ENCODE measurements at regions of chr7 and their contacts with region 1.

Region 1: GRCh38 chr7:43869006-43869866 is at the start of gene MRPS24:
- DNase-seq: peak; percentile 91
- H3K4me3 ChIP-seq: peak within 1 kb of the TSS; percentile 52 to 71 (median 66)
- H3K27ac ChIP-seq: no peak within 1 kb of the TSS
- H3K4me1 ChIP-seq: peaks cover 11% of the 10 kb centered on the region
- H3K27me3 ChIP-seq: no peaks in the 10 kb centered on the region
- CTCF ChIP-seq: no peak
- POLR2A ChIP-seq: peak; percentile 95
- total RNA-seq, gene MRPS24: 105 and 110 TPM in 2 replicates

Region 2: DNA sequence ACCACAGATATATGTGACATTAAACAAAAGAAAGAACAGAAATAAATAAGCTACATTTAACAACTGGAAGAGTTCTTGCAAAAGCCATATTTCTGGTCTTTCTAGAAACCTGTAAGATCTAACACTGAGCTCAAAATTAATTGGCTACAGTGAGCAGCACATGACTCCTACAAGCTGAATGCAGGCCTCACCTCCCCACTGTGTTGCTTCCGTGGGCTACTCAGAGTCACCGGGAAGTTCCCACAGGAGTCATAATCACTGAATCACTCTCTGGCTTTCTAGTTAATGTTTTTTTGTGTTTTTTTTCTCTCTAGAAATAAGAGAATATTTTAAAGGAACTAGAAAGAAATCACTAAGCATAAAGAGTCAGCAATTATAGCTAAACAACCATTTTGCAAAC is 10.2 kb after region 1 on chr7:
- CTCF ChIA-PET with region 1: interaction called, 9 read pairs
- POLR2A ChIA-PET with region 1: interaction called, 10 read pairs
- dilution Hi-C with region 1: no loop called
- intact Hi-C with region 1: loop called (anchors 1 kb)
- DNase-seq: peak; percentile 77
- H3K4me3 ChIP-seq: no peak overlapping the region
- H3K27ac ChIP-seq: peak overlapping the region; percentile 58
- H3K4me1 ChIP-seq: peaks cover 30% of the 10 kb centered on the region
- H3K27me3 ChIP-seq: no peaks in the 10 kb centered on the region
- CTCF ChIP-seq: no peak
- POLR2A ChIP-seq: no peak

Region 3: GRCh38 chr7:43960933-43961332 is 91.7 kb after region 1 on chr7:
- CTCF ChIA-PET with region 1: no interaction called
- POLR2A ChIA-PET with region 1: interaction called, 12 read pairs
- dilution Hi-C with region 1: no loop called
- intact Hi-C with region 1: no loop called
- DNase-seq: no peak
- H3K4me3 ChIP-seq: no peak overlapping the region
- H3K27ac ChIP-seq: no peak overlapping the region
- H3K4me1 ChIP-seq: peaks cover under 1% of the 10 kb centered on the region
- H3K27me3 ChIP-seq: no peaks in the 10 kb centered on the region
- CTCF ChIP-seq: no peak
- POLR2A ChIP-seq: no peak

Region 4: DNA sequence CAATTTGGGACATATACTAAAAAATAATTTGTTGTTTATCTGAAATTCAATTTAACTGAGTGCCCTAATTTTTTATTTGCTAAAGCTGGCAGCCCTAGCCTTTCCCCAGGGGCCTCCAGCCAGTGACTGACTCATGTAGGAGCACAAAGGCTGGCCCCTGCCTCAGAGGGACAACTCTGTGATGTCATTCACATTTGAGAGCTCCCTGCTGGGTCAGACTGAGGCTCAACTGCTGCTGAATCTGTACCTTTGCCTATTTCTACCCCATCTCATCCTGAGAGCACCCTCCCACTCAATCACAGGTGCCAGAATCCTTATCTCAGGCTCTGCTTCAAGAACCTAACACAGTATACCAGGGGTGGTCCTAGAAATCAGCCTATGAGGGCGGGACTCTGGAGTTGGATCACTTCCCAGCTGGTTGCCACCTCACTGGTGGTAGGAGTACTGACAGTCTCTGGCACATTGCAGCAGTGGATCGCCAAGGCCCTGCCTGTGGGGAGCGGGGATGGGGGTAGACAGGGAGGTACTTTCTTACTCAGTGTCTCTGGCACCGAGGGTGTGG is 308.4 kb after region 1 on chr7:
- CTCF ChIA-PET with region 1: no interaction called
- POLR2A ChIA-PET with region 1: no interaction called
- dilution Hi-C with region 1: no loop called
- intact Hi-C with region 1: no loop called
- DNase-seq: no peak
- H3K4me3 ChIP-seq: no peak overlapping the region
- H3K27ac ChIP-seq: no peak overlapping the region
- H3K4me1 ChIP-seq: no peaks in the 10 kb centered on the region
- H3K27me3 ChIP-seq: peaks cover 10 to 18% of the 10 kb centered on the region in 2 experiments
- CTCF ChIP-seq: no peak
- POLR2A ChIP-seq: no peak

Measured in endothelial cell of umbilical vein (primary cell).